ENCODE measurements at regions of chr9 and their contacts with region 1.

Region 1: GRCh38 chr9:93549611-93550010 is 26.8 kb upstream of the PHF2 start:
- DNase-seq: no peak
- ATAC-seq: no peak
- H3K4me3 ChIP-seq: no peak overlapping the region
- H3K27ac ChIP-seq: no peak overlapping the region
- H3K4me1 ChIP-seq: no peaks in the 10 kb centered on the region
- H3K27me3 ChIP-seq: no peaks in the 10 kb centered on the region
- CTCF ChIP-seq: no peak

Region 2: GRCh38 chr9:93464395-93464794 is 85.2 kb before region 1 on chr9:
- CTCF ChIA-PET with region 1: interaction called, 15 read pairs
- POLR2A ChIA-PET with region 1: no interaction called
- in situ Hi-C with region 1: no loop called
- intact Hi-C with region 1: no loop called
- DNase-seq: no peak
- ATAC-seq: no peak
- H3K4me3 ChIP-seq: no peak overlapping the region
- H3K27ac ChIP-seq: no peak overlapping the region
- H3K4me1 ChIP-seq: peaks cover 45% of the 10 kb centered on the region
- H3K27me3 ChIP-seq: no peaks in the 10 kb centered on the region
- CTCF ChIP-seq: no peak